A549 (cell line): ENCODE measurements at regions of chr20 and their contacts with region 1.

Region 1: DNA sequence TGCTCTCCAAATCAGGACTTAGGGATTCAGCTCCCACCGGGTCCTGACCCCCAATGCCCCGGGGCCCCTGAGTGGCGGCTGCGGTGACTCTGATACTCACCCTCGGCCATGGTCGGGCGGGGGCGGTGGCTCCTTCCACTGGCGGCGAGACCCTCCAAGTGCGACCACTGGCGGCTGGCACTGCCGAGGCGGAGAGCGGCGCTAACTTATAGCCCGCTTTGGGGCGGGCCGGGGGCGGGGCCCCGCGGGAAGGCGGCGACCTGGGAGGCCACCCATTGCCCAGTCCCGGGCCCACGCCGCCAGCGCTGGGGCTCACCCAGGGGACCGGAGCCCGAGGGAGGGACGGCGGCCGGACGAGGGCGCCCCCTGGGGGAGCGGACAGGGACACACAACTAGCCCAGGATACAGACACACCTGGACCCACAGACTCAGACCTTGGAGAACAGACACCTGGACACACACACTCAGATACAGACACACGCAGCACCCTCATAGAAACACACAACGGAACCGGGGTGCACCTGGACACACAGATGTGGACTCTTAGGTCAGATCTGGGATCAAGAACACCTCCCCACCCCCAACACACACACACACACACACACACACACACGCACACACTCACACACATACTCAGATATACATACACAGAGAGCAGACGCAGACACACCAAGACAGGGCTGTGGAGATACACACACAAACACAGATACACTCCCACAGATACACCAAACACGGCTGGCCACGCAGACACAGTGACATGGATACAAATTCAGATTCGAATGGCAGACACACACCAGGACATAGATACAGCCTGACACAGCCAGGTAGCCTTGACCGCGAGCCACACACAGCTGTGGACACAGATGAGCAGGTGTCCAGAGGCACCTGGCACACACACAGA is at the start of gene TGM2:
- DNase-seq: peak; percentile 73 to 86
- ATAC-seq: peak; percentile 68 to 88
- H3K4me3 ChIP-seq: peak within 1 kb of the TSS; percentile 62
- H3K27ac ChIP-seq: peak within 1 kb of the TSS; percentile 91 to 93
- H3K4me1 ChIP-seq: peaks cover 84% of the 10 kb centered on the region
- CTCF ChIP-seq: peak; percentile 88
- EP300 ChIP-seq: no peak
- POLR2A ChIP-seq: peak; percentile 89
- RAD21 ChIP-seq: peak; percentile 80 to 93
- polyA plus RNA-seq, gene TGM2: 173 TPM in 2 replicates

Region 2: DNA sequence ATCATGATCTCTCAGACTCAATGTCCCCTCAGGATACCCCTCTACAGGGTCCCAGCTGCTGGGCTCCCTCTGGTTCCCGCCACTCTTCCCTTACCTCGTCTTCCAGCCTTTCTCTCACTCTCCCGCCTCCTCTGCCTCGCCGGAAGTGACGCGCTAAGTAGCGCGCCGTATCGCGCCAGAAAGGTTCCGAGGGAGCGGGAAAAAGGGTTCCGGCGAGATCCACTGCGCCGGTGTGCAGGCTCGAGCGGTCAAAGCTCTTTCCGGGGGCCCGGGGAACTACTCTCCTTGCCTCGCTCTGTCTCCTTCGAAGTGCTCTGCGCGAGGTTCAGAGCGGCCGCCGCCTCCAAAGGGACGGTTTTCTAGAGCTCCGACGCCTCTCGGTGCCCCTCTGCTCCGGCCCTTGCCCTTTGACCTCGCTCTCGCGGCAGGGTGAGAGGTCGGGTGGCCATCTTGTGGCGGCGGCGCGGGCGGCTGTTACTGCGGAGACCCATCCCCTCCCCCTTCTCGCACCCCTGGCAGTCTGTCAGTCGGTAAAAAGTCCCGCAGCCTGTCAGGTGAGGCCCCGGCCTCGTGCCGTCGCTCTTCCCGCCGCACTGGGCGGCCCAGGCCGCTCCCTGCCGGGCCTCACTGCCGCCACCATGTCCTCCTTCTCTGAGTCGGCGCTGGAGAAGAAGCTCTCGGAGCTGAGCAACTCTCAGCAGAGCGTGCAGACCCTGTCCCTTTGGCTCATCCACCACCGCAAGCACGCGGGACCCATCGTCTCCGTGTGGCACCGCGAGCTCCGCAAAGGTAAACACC is 131.8 kb before region 1 on chr20 and contains the starts of genes RPRD1B and TTI1:
- CTCF ChIA-PET with region 1: no interaction called
- POLR2A ChIA-PET with region 1: no interaction called
- DNase-seq: peak; percentile 80 to 90
- ATAC-seq: peak; percentile 95 to 98
- H3K4me3 ChIP-seq: peak within 1 kb of the TSS; percentile 88
- H3K27ac ChIP-seq: peak within 1 kb of the TSS; percentile 91 to 95
- H3K4me1 ChIP-seq: peaks cover 25% of the 10 kb centered on the region; the same call in 2 of the 3 replicates
- CTCF ChIP-seq: no peak
- EP300 ChIP-seq: no peak
- POLR2A ChIP-seq: peak; percentile 56
- RAD21 ChIP-seq: no peak; a peak in 2 of 5 replicates
- polyA plus RNA-seq, gene RPRD1B: 26.7 and 28.4 TPM in 2 replicates
- polyA plus RNA-seq, gene TTI1: 27.9 and 30.6 TPM in 2 replicates

Region 3: DNA sequence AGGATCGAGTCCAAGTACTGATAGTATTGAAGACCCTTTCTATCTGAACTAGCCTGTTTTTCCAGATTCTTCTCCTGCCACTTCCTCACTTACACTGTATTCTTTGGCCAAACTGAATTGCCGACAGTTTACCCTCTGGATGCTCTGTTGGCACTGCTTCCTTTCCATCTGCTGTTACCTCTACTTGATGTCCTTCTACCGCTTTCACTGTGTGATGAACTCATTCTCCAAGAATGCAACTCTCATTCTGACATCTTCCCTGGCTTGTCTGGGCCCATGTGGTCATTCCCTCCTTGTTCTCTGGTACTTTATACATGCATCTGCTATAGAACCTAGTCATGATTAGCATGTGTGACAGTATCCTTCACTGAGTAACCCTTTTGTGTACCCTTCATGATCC is 115.5 kb before region 1 on chr20:
- CTCF ChIA-PET with region 1: interaction called, 182 read pairs
- POLR2A ChIA-PET with region 1: no interaction called
- DNase-seq: no peak
- ATAC-seq: peak in 1 of 2 experiments; percentile 66; a peak in 4 of 6 replicates
- H3K4me3 ChIP-seq: no peak overlapping the region
- H3K27ac ChIP-seq: peak overlapping the region in 1 of 2 experiments; percentile 41; a peak in 2 of 6 replicates
- H3K4me1 ChIP-seq: peaks cover 18% of the 10 kb centered on the region
- CTCF ChIP-seq: no peak
- EP300 ChIP-seq: no peak
- POLR2A ChIP-seq: no peak
- RAD21 ChIP-seq: no peak

Region 4: DNA sequence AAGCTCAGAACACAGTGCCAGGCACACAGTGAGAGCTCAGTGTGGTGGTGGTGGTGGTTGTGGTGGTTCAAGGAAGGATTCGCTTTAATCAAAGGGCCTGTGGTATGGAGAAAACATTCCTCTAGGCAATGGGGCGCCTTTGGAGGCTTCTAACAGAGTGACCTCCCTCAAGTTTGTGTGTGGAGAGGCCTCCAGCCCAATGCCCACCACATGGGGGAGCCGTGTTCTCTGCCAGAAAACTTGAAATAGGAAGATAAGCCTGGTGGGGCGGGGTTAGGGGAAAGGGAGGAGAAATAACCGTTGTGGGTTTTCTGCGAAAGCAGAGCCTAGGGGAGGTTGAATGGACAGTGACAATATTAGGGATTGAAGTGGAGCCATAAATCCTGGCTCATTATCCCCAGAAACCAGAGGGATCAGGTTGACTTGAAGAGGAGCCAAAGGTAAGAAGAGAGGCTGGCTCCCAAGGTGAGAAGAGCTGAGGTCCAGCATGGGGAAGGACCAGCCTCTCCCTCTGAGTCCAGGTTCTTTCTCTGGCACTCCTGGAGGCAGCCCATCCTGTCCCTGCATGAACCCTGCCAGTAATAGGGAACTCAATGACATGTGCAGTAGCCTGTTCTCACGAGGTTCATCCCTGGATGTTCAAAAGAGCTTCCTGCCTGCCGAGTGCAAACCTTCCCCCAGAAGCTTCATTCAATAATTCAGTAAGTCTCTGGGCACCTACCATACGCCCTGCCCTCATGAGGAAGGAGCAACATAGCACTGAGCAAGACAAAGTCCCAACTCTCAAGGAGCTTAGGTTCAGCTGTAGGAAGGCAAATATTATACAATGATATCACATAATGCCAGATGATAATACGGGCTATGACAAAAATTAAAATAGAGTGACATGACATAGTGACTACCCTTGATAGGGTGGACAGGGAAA is 51.7 kb before region 1 on chr20:
- CTCF ChIA-PET with region 1: interaction called, 14 read pairs
- POLR2A ChIA-PET with region 1: no interaction called
- DNase-seq: peak in 1 of 2 experiments; percentile 67
- ATAC-seq: peak in 1 of 2 experiments; percentile 61; a peak in 3 of 6 replicates
- H3K4me3 ChIP-seq: no peak overlapping the region
- H3K27ac ChIP-seq: peak overlapping the region; percentile 80 to 88
- H3K4me1 ChIP-seq: peaks cover 60% of the 10 kb centered on the region
- CTCF ChIP-seq: peak; percentile 35; the same call in 2 of the 3 replicates
- EP300 ChIP-seq: no peak
- POLR2A ChIP-seq: no peak
- RAD21 ChIP-seq: peak; percentile 43 to 62

Region 5: GRCh38 chr20:38143646-38144554 is 21.4 kb before region 1 on chr20:
- CTCF ChIA-PET with region 1: interaction called, 28 read pairs
- POLR2A ChIA-PET with region 1: interaction called, 3 read pairs
- DNase-seq: peak; percentile 63 to 91
- ATAC-seq: peak; percentile 69 to 74
- H3K4me3 ChIP-seq: no peak overlapping the region
- H3K27ac ChIP-seq: peak overlapping the region; percentile 83 to 95
- H3K4me1 ChIP-seq: peaks cover 75% of the 10 kb centered on the region
- CTCF ChIP-seq: no peak
- EP300 ChIP-seq: no peak
- POLR2A ChIP-seq: no peak
- RAD21 ChIP-seq: no peak

Region 6: GRCh38 chr20:38152621-38153231 is 12.6 kb before region 1 on chr20:
- CTCF ChIA-PET with region 1: interaction called, 23 read pairs
- POLR2A ChIA-PET with region 1: no interaction called
- DNase-seq: peak; percentile 72 to 74
- ATAC-seq: peak; percentile 60 to 72
- H3K4me3 ChIP-seq: 0 out of 3 replicates have a peak overlapping the region, but pooled peaks have one; percentile 4
- H3K27ac ChIP-seq: peak overlapping the region; percentile 84 to 87
- H3K4me1 ChIP-seq: peaks cover 78% of the 10 kb centered on the region
- CTCF ChIP-seq: no peak
- EP300 ChIP-seq: peak in 1 of 2 experiments; percentile 19; a peak in 1 of 5 replicates
- POLR2A ChIP-seq: no peak
- RAD21 ChIP-seq: no peak

Region 7: GRCh38 chr20:38337561-38338140 is 172.3 kb after region 1 on chr20:
- CTCF ChIA-PET with region 1: no interaction called
- POLR2A ChIA-PET with region 1: no interaction called
- DNase-seq: peak; percentile 58 to 84
- ATAC-seq: peak; percentile 63 to 95; a peak in 5 of 6 replicates
- H3K4me3 ChIP-seq: no peak overlapping the region
- H3K27ac ChIP-seq: no peak overlapping the region
- H3K4me1 ChIP-seq: no peaks in the 10 kb centered on the region
- CTCF ChIP-seq: peak; percentile 45
- EP300 ChIP-seq: no peak
- POLR2A ChIP-seq: no peak
- RAD21 ChIP-seq: peak; percentile 43 to 78